ENCODE measurements at regions of chr22 and their contacts with region 1.

Region 1: DNA sequence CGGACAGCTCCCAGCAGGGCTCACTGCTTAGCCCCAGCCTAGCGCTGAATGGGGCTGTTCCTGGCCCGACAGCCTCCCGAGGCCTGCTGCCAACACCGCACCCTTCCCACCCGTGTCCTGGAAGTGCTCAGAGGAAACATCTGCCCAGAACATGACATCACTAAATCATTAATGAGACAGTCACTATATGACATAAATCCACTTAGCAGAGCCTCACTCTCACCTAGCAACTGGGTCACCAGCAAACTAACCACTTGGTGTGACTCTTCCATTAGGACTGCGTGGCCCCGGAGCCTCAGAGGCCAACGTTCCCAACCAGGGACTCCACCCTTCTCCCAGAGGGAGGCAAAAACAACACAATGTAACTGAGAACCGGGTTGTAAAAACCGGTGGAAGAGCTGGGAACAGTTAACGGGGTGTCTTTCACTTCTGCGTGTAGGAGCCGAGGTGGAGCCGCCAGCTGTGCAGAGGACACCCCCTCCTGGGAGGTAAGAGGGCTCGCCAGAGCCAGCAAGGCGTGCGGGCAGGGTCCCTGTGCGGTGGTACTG is 21.4 kb upstream of the PACSIN2 start:
- DNase-seq: peak; percentile 82
- ATAC-seq: peak; percentile 88

Region 2: DNA sequence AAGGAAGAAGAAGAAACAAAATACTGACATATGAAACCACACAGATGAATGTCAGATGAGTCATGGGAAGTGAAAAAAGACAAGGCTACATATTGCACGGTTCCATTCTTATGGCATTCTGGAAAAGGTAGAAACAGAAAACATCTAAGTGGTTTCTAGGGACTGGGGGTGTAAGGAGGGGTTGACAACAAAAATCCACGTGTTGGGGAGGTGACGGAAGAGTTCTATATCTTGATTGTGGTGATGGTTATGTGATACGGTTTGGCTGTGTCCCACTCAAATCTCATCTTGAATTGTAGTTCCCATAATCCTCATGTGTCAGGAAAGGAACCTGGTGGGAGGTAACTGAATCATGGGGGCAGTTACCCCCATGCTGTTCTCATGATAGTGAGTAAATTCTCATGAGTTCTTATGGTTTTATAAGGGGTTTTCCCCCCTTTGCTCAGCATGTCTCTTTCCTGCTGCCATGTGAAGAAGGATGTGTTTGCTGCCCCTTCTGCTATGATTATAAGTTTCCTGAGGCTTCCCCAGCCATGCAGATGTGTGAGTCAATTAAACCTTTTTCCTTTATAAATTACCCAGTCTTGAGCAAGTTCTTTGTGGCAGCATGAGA is 172.9 kb before region 1 on chr22:
- intact Hi-C with region 1: loop called (anchors 10 kb)
- DNase-seq: no peak
- ATAC-seq: no peak

Region 3: GRCh38 chr22:42919199-42919598 is 117.2 kb before region 1 on chr22:
- intact Hi-C with region 1: no loop called
- DNase-seq: no peak
- ATAC-seq: peak; percentile 5

Region 4: DNA sequence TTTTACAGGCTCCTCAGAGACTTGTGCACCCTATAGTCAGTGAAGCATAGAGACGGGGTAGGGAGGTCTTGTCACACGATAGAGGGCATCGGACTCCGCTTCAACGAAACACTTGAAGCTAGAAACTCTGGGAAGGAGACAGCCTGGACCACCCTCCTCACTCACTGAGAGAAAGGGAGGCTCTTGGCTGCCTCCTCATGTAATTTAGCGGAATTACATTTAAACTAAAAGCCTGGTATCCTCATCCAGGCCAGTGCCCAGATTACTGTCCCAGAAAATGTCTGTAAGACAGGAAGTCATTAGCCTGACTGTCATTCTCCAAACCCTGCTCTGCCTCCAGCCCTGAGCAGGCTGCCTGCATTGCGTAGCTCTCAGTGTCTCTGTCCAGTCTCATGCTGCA is 16.8 kb after region 1 on chr22:
- intact Hi-C with region 1: loop called (anchors 2 kb)
- DNase-seq: no peak
- ATAC-seq: no peak

Region 5: DNA sequence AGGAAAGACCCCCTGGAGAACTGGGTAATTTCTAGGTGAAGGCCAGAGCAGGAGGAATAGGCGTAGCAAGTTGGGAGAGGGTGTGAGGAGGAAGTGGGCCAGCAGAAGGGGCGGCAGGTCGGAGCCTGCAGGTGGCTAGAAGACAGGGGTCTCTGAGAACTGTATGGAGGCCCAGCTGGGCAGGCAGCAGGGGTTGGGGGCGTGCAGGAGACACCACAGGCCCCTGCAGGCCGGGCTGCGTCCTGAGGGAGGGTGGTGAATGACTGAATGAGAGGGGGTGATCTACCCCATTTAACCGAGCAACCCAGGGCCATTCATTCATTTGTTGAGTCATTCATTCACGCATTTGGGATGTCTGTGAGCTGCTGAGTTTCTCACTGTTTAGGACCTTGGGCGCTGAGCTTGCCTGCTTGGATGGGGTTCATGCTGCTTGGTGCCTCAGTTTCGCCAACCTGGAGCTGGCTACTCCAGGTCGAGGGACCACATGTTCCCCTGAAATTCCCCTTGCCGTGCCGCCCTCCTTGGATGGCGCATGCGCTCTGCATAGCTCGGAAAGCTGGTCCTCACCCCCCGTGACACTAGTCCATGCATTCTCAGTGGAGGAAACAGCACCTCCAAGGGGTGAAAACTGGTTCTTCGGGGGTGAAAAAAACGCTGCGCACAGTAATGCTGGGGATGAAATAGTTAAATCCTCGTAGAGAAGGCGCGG is 391.1 kb after region 1 on chr22:
- intact Hi-C with region 1: no loop called
- DNase-seq: no peak
- ATAC-seq: no peak